ENCODE measurements at regions of chr7 and their contacts with region 1.

Region 1: GRCh38 chr7:5997222-5997808 is 11.5 kb downstream of the PMS2 start:
- DNase-seq: no peak
- H3K4me3 ChIP-seq: no peak overlapping the region
- H3K27ac ChIP-seq: peak overlapping the region; percentile 6 to 47
- H3K4me1 ChIP-seq: no peaks in the 10 kb centered on the region
- H3K27me3 ChIP-seq: no peaks in the 10 kb centered on the region
- CTCF ChIP-seq: peak; percentile 48 to 60 (median 55)

Region 2: GRCh38 chr7:6032167-6032566 is 34.9 kb after region 1 on chr7:
- intact Hi-C with region 1: no loop called
- DNase-seq: no peak
- H3K4me3 ChIP-seq: no peak overlapping the region
- H3K27ac ChIP-seq: no peak overlapping the region
- H3K4me1 ChIP-seq: no peaks in the 10 kb centered on the region
- H3K27me3 ChIP-seq: no peaks in the 10 kb centered on the region
- CTCF ChIP-seq: no peak

Region 3: GRCh38 chr7:6435486-6436384 is 438.4 kb after region 1 on chr7:
- intact Hi-C with region 1: loop called (anchors 2 kb)
- DNase-seq: peak in 1 of 2 donors; percentile 88
- H3K4me3 ChIP-seq: peak overlapping the region in 1 of 2 donors; percentile 39
- H3K27ac ChIP-seq: peak overlapping the region in 1 of 2 donors; percentile 13
- H3K4me1 ChIP-seq: peaks cover 0 to 4% of the 10 kb centered on the region in 2 donors
- H3K27me3 ChIP-seq: no peaks in the 10 kb centered on the region
- CTCF ChIP-seq: peak; percentile 79 to 97 (median 96)

Measured in ascending aorta (tissue), 2 donors.